Panc1 (cell line): ENCODE measurements at regions of chr18 and their contacts with region 1.

Region 1: DNA sequence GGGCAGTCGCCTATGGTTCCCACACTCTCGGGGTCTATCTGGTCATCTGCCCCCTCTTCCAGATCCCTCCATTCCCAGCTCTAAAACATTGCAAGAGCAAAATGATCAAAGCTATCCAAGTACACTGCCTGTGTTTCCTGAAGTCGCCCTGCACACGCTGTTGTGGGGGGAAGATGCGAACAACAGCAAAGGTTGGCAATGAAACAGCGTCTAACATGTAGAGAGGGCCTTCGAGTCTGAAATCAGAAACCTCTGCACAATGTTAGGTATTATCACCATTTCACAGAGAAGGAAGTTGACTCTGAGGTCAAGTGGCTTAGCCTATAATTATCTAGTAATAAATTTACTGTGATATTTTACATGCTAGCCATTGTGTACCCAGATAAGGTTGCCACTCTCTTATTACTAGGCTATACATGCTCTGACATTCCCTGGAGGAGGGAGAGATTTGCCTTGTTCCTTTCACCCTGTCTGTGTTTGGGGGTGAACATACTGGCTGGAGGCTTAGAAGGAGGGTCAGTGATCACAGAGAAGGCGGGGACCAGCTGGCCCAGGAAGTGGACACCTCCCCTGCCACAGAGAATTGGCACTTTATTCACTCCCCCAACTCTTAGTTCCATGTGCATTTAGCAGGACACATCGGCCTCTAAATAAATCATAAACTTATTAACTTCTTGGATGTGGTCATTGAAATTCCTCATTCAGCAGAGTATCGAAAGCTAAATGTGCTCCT is 36.8 kb downstream of the KCTD1 start:
- DNase-seq: no peak
- ATAC-seq: peak; percentile 66
- H3K4me3 ChIP-seq: peak overlapping the region in 1 of 2 experiments; percentile 26; a peak in 3 of 4 replicates
- H3K27ac ChIP-seq: peak overlapping the region; percentile 64
- H3K4me1 ChIP-seq: peaks cover 50% of the 10 kb centered on the region
- H3K27me3 ChIP-seq: no peaks in the 10 kb centered on the region
- CTCF ChIP-seq: no peak

Region 2: GRCh38 chr18:26579941-26580618 is 68.6 kb after region 1 on chr18:
- CTCF ChIA-PET with region 1: interaction called, 10 read pairs
- POLR2A ChIA-PET with region 1: no interaction called
- in situ Hi-C with region 1: no loop called
- intact Hi-C with region 1: no loop called
- DNase-seq: no peak
- ATAC-seq: no peak
- H3K4me3 ChIP-seq: no peak overlapping the region
- H3K27ac ChIP-seq: no peak overlapping the region
- H3K4me1 ChIP-seq: peaks cover 5% of the 10 kb centered on the region; the same call in 1 of the 2 replicates
- H3K27me3 ChIP-seq: no peaks in the 10 kb centered on the region
- CTCF ChIP-seq: no peak